Common myeloid progenitor, CD34-positive (primary cell): ENCODE measurements at regions of chr14 and their contacts with region 1.

Region 1: DNA sequence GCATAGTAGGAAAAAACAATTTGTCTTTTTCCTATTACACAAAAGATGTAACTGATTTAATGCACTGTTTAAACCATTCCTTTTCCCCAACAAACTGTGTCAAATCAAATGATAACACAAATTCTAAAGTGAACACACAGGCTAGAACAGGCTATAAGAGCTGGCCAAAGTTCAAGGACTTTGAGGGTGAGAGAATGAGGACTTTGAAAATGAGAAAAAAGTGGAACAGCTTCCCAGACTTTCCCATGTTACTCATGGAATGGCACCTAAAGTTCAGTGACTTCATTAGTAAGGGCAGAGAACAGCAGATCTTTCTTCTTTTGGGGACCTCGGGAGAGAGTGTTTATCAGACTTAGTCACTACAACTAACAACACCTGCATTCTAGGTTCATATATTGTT is 22.6 kb downstream of the TMEM253 start:
- DNase-seq: no peak
- H3K4me3 ChIP-seq: no peak overlapping the region
- H3K27ac ChIP-seq: no peak overlapping the region
- H3K4me1 ChIP-seq: no peaks in the 10 kb centered on the region
- H3K27me3 ChIP-seq: no peaks in the 10 kb centered on the region

Region 2: DNA sequence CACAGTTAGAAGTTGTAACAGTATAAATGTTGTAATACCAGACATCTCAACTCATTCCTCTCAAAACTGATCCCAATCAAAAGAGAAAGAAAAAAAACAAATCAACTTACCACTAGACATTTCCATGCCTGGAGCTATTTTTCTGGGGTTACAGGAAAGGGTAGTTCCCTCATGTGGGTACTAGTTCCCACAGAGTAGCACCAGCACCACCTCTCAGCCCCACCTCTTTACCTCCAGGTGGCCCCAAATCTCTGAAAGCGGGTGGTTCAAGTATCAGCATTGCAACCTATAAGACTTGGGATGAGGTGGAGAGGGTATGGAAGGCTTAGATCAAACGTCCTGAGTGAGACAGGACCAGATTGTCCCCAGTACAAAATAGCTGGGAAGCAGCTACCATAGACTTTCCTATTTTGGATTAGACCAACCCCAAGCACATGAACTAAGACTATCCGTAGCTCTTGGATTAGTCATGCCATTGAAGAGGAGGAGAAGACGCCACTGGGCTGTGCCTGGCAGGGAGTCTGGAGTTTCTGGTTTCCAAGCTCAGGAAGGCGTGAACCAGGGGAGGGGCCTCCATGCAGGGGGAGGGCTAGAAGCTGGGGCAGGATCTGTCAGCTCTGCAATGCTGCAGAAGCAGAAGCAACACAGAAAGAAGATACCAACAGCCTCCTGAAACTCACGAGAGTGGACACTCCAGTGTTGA is 124.6 kb before region 1 on chr14 and contains the start of gene SLC39A2:
- CTCF ChIA-PET with region 1: no interaction called
- POLR2A ChIA-PET with region 1: no interaction called
- DNase-seq: no peak
- H3K4me3 ChIP-seq: no peak within 1 kb of the TSS
- H3K27ac ChIP-seq: no peak within 1 kb of the TSS
- H3K4me1 ChIP-seq: no peaks in the 10 kb centered on the region
- H3K27me3 ChIP-seq: no peaks in the 10 kb centered on the region

Region 3: GRCh38 chr14:21136024-21136423 is 12.6 kb after region 1 on chr14:
- CTCF ChIA-PET with region 1: interaction called, 12 read pairs
- POLR2A ChIA-PET with region 1: no interaction called
- DNase-seq: peak; percentile 3 to 37 (median 31)
- H3K4me3 ChIP-seq: no peak overlapping the region
- H3K27ac ChIP-seq: no peak overlapping the region
- H3K4me1 ChIP-seq: no peaks in the 10 kb centered on the region
- H3K27me3 ChIP-seq: no peaks in the 10 kb centered on the region